ENCODE measurements at regions of chr11 and their contacts with region 1.

Region 1: GRCh38 chr11:6377902-6378639 is 12.2 kb upstream of the SMPD1 start:
- DNase-seq: peak in 3 of 10 donors; percentile 10 to 43 (median 42)
- ATAC-seq: peak; percentile 86 to 92
- H3K4me3 Mint-ChIP-seq: peak overlapping the region; percentile 53 to 84 (median 70)
- H3K27ac Mint-ChIP-seq: peak overlapping the region; percentile 46 to 96 (median 92)
- H3K4me1 Mint-ChIP-seq: peaks cover 21 to 37% (median 33%) of the 10 kb centered on the region in 4 donors
- H3K27me3 Mint-ChIP-seq: no peaks in the 10 kb centered on the region

Region 2: GRCh38 chr11:6389921-6390724 is 12.1 kb after region 1 on chr11 and contains the start of gene SMPD1:
- POLR2A ChIA-PET with region 1: interaction called, 71 read pairs
- DNase-seq: peak; percentile 90 to 97 (median 92)
- ATAC-seq: peak; percentile 83 to 85
- H3K4me3 Mint-ChIP-seq: peak within 1 kb of the TSS; percentile 91 to 97 (median 93)
- H3K27ac Mint-ChIP-seq: peak within 1 kb of the TSS; percentile 96 to 99 (median 98)
- H3K4me1 Mint-ChIP-seq: peaks cover 35 to 82% (median 67%) of the 10 kb centered on the region in 4 donors
- H3K27me3 Mint-ChIP-seq: no peaks in the 10 kb centered on the region
- polyA plus RNA-seq, gene SMPD1: 22.4 to 32.6 (median 31.7) TPM

Region 3: GRCh38 chr11:6419009-6419631 is 41.0 kb after region 1 on chr11 and contains the start of gene APBB1:
- POLR2A ChIA-PET with region 1: interaction called, 28 read pairs
- DNase-seq: peak; percentile 63 to 85 (median 78)
- ATAC-seq: peak; percentile 64 to 73
- H3K4me3 Mint-ChIP-seq: peak within 1 kb of the TSS in 9 of 10 donors; percentile 76 to 89 (median 84)
- H3K27ac Mint-ChIP-seq: peak within 1 kb of the TSS in 9 of 10 donors; percentile 84 to 92 (median 91)
- H3K4me1 Mint-ChIP-seq: peaks cover 8 to 12% (median 10%) of the 10 kb centered on the region in 4 donors
- H3K27me3 Mint-ChIP-seq: peaks cover 0 to 22% (median 2%) of the 10 kb centered on the region in 5 donors
- polyA plus RNA-seq, gene APBB1: 115 to 196 (median 146) TPM

Region 4: DNA sequence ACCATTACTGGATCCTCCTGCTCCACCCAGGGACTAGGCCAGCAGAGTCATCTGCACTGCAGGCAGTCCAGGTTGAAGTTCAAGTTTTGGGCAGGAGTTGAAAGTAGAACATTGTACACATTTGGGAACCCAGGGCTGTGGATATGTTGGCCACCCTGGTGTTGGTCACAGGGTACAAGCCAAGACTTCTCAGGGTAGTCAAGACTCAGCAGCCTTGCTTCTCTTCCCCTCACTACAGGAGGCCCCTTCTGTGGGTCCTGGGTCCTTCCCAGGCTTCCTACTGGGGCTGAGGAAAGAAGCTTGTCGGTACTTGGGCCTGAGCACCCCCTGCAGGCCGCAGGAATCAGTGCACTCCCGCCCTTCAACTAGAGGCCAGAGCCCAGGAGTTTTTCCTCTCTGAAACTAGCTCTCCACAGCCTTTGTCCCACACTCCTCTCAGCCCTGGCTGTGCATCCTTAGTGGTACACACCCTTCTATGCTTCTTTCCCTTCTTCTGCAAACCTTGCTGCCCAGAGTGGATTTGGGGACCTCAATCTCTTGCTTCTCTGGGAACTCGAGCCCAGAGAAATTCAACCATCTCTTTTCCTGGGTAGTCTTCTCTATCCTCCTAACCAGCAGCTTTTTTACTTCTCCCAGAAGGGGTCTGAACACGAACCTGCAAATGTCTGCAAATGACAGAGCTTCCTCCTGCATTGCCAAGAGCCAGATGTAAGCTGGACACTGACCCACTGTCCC is 65.4 kb after region 1 on chr11:
- POLR2A ChIA-PET with region 1: interaction called, 62 read pairs
- DNase-seq: peak; percentile 38 to 71 (median 56)
- ATAC-seq: peak; percentile 84 to 94
- H3K4me3 Mint-ChIP-seq: no peak overlapping the region
- H3K27ac Mint-ChIP-seq: no peak overlapping the region
- H3K4me1 Mint-ChIP-seq: peaks cover 0 to 3% (median under 1%) of the 10 kb centered on the region in 4 donors
- H3K27me3 Mint-ChIP-seq: no peaks in the 10 kb centered on the region